Activated B cell treated with CpG ODN at 0.5 μM for 24 hours (primary cell): ENCODE measurements at regions of chr2 and their contacts with region 1.

Region 1: GRCh38 chr2:68807821-68808266 is 63.4 kb downstream of the BMP10 start:
- DNase-seq: no peak
- ATAC-seq: no peak
- H3K4me3 Mint-ChIP-seq: no peak overlapping the region
- H3K27ac Mint-ChIP-seq: peak overlapping the region; percentile 87
- H3K4me1 Mint-ChIP-seq: peaks cover 64% of the 10 kb centered on the region
- H3K27me3 Mint-ChIP-seq: no peaks in the 10 kb centered on the region
- CTCF ChIP-seq: no peak

Region 2: GRCh38 chr2:68789603-68790002 is 18.2 kb before region 1 on chr2:
- CTCF ChIA-PET with region 1: interaction called, 6 read pairs
- POLR2A ChIA-PET with region 1: interaction called, 84 read pairs
- intact Hi-C with region 1: no loop called
- DNase-seq: peak; percentile 75
- ATAC-seq: peak; percentile 87
- H3K4me3 Mint-ChIP-seq: peak overlapping the region; percentile 61
- H3K27ac Mint-ChIP-seq: no peak overlapping the region
- H3K4me1 Mint-ChIP-seq: peaks cover 47% of the 10 kb centered on the region
- H3K27me3 Mint-ChIP-seq: no peaks in the 10 kb centered on the region
- CTCF ChIP-seq: no peak

Region 3: DNA sequence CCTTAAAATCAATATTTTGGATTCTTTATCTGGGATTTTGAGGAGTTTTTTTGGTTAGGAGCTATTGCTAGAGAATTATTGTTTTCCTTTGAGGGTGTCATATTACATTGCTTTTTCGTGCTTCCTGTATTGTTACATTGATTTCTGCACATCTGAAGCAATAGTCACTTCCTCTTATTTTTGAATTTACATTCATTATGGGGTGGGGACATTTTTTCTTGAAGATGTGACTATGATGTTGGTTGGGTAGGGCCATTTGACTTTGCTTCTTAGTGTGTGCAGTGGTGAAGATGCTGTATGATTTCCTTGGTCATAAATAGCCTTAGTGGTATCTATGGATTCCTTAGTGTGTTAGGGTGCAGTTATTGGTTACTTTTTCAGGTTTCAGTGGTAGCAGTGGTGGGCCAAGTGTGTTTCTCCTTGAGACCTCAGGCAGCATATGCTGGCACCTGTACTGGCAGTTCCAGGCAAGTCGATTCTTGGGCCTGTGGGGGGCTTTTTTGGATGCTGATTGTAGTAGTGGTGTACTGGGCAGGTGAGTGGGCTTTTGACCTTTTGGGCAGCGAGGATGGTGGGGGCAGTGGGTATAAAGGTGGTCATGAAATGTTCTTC is 11.4 kb before region 1 on chr2:
- CTCF ChIA-PET with region 1: interaction called, 4 read pairs
- POLR2A ChIA-PET with region 1: interaction called, 84 read pairs
- intact Hi-C with region 1: loop called (anchors 1 kb)
- DNase-seq: no peak
- ATAC-seq: peak; percentile 70
- H3K4me3 Mint-ChIP-seq: peak overlapping the region; percentile 68
- H3K27ac Mint-ChIP-seq: no peak overlapping the region
- H3K4me1 Mint-ChIP-seq: peaks cover 94% of the 10 kb centered on the region
- H3K27me3 Mint-ChIP-seq: no peaks in the 10 kb centered on the region
- CTCF ChIP-seq: no peak

Region 4: GRCh38 chr2:68819556-68819955 is 11.7 kb after region 1 on chr2:
- CTCF ChIA-PET with region 1: no interaction called
- POLR2A ChIA-PET with region 1: interaction called, 3 read pairs
- intact Hi-C with region 1: loop called (anchors 2 kb)
- DNase-seq: no peak
- ATAC-seq: no peak
- H3K4me3 Mint-ChIP-seq: no peak overlapping the region
- H3K27ac Mint-ChIP-seq: no peak overlapping the region
- H3K4me1 Mint-ChIP-seq: peaks cover 12% of the 10 kb centered on the region
- H3K27me3 Mint-ChIP-seq: no peaks in the 10 kb centered on the region
- CTCF ChIP-seq: no peak

Region 5: GRCh38 chr2:68837164-68837860 is 29.5 kb after region 1 on chr2:
- CTCF ChIA-PET with region 1: no interaction called
- POLR2A ChIA-PET with region 1: interaction called, 27 read pairs
- intact Hi-C with region 1: loop called (anchors 1 kb)
- DNase-seq: peak; percentile 53
- ATAC-seq: peak; percentile 33
- H3K4me3 Mint-ChIP-seq: no peak overlapping the region
- H3K27ac Mint-ChIP-seq: peak overlapping the region; percentile 74
- H3K4me1 Mint-ChIP-seq: peaks cover 57% of the 10 kb centered on the region
- H3K27me3 Mint-ChIP-seq: no peaks in the 10 kb centered on the region
- CTCF ChIP-seq: no peak